Right ventricle myocardium inferior (tissue), 1 donor: ENCODE measurements at regions of chr10 and their contacts with region 1.

Region 1: GRCh38 chr10:86366033-86366901 is at the start of gene GRID1:
- DNase-seq: no peak
- ATAC-seq: peak; percentile 61
- total RNA-seq, gene GRID1: 1.3 TPM

Region 2: GRCh38 chr10:86024281-86025041 is 341.8 kb before region 1 on chr10:
- intact Hi-C with region 1: loop called (anchors 10 kb)
- DNase-seq: no peak
- ATAC-seq: peak; percentile 91

Region 3: DNA sequence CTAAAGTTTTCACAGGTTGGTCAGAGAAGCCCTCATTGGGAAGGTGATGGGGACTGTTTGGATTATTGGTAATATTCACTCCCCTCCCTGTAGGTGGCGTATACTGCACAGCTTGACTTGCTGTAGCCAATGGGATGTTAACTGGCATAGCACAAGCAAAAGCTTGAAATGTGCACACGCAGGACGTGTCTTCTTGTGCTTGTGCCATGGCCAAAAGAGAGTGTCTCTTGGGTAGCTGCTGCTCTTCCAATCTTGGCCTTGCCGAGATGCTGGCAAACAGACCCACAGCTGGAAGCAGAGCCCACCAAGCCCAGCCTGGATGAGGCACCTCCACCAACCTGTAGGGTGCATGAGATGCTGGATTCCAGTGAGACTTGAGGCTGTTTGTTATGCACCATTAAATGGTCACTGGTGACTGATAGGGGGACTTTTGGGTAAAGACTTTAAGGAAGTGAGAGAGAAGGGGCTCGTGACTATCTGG is 265.6 kb before region 1 on chr10:
- intact Hi-C with region 1: loop called (anchors 10 kb)
- DNase-seq: peak; percentile 16
- ATAC-seq: no peak

Region 4: GRCh38 chr10:86345296-86346168 is 20.7 kb before region 1 on chr10:
- intact Hi-C with region 1: no loop called
- DNase-seq: no peak
- ATAC-seq: no peak